Activated B cell treated with CpG ODN at 0.5 μM for 24 hours (primary cell): ENCODE measurements at regions of chr3 and their contacts with region 1.

Region 1: DNA sequence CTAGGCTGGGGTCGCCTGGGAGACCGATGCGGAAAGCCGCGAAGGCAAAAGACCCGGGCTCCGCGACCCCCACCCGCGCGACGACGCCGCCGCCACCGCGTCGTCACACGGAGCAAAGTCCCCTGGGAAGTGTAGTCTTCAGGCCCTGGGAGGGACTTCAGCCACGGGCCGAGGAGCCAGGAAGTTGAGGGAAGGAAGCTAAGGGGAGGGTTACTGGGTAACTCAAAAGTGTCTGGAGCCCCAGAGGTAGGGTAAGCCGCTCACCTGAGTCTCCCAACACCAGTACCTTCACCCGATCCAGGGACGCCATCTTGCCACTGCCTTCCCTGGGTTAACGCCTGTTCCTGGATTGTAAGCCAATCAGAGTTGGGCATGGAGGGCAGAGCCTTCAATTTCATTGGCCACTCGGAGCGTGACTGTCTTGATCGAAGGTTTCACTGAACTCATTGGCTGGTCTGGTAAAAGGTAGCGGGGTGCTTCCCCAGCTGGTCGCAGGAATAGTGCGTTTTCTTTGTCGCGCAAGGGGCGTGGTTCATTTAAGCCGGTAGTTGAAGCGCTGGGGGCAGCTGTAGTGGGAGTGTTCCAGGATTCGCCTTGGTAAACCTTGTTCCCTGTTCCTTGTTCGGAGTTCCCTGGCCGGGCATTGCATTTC is at the starts of genes GTF2E1 and RABL3:
- DNase-seq: peak; percentile 88
- ATAC-seq: peak; percentile 96
- H3K4me3 Mint-ChIP-seq: peak within 1 kb of the TSS; percentile 96
- H3K27ac Mint-ChIP-seq: peak within 1 kb of the TSS; percentile 97
- H3K4me1 Mint-ChIP-seq: peaks cover 36% of the 10 kb centered on the region
- H3K27me3 Mint-ChIP-seq: no peaks in the 10 kb centered on the region
- CTCF ChIP-seq: no peak
- total RNA-seq, gene GTF2E1: 22.1 and 22.9 TPM in 2 replicates
- total RNA-seq, gene RABL3: 29.7 and 29.9 TPM in 2 replicates

Region 2: GRCh38 chr3:119702530-119703157 is 1039.7 kb before region 1 on chr3 and contains the start of gene CFAP91:
- CTCF ChIA-PET with region 1: no interaction called
- POLR2A ChIA-PET with region 1: no interaction called
- intact Hi-C with region 1: loop called (anchors 1 kb)
- DNase-seq: peak; percentile 86
- ATAC-seq: peak; percentile 92
- H3K4me3 Mint-ChIP-seq: peak within 1 kb of the TSS; percentile 86
- H3K27ac Mint-ChIP-seq: peak within 1 kb of the TSS; percentile 72
- H3K4me1 Mint-ChIP-seq: peaks cover 52% of the 10 kb centered on the region
- H3K27me3 Mint-ChIP-seq: no peaks in the 10 kb centered on the region
- CTCF ChIP-seq: no peak
- total RNA-seq, gene CFAP91: 8.5 and 12.9 TPM in 2 replicates

Region 3: DNA sequence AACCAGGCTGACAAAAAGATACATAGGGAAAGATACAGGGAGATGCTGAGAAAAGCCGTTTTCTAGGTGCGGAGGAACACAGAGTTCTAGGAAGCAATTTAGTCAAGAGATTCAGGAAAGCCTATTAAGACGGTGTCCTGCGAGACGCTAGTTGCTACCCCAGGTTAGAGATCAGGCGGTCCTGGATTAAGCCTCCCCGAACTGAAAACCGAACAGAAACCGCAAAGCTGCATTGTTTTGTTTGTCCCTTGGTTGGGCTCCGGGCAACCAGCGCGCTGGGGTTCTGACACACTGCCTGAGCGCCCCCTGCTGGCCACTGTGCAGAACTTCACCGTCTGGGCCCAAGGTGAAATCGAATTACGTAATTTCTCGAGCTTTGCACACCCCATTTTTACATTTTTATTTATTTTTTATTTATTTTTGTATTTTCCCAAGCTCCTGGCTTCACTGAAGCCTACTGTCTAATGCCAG is 183.5 kb before region 1 on chr3:
- CTCF ChIA-PET with region 1: no interaction called
- POLR2A ChIA-PET with region 1: interaction called, 4 read pairs
- intact Hi-C with region 1: loop called (anchors 1 kb)
- DNase-seq: peak; percentile 74
- ATAC-seq: peak; percentile 86
- H3K4me3 Mint-ChIP-seq: peak overlapping the region; percentile 79
- H3K27ac Mint-ChIP-seq: peak overlapping the region; percentile 67
- H3K4me1 Mint-ChIP-seq: peaks cover 14% of the 10 kb centered on the region
- H3K27me3 Mint-ChIP-seq: peaks cover 18% of the 10 kb centered on the region
- CTCF ChIP-seq: peak; percentile 84

Region 4: DNA sequence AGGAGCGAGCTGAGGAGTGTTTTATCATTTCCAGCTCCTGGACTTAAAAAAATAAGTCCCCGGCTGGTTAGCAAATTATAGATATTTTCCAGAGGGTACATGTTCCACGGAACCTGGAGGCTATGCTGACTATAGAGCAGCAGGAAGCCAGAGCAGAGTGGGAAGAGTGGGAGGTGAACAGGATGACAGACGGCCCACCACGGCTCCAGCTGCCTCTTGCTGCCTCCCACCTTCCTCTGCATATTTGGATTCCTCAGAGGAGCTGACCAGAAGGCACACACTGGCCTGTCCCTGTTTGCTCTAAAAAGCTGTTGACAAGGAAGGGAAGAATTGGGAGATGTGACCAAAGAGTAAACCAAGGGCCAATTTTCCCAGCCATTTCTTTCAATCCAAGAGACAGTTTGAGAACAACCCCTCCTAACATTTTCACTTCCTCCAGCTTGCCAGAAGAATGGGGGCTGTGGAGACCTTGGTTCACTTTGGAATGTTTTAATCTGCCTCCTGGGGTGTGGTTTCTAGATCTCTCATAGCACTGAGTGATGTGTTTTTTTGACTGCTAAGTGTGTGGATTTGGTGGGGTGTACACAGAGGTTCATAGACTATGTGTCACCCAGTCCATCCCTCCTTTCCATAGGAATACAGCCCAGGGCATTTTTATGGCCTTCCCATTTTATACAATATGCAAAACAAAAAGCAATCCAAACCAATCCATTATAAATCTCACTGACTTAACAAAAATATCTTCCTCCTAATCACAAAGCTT is 97.1 kb before region 1 on chr3:
- CTCF ChIA-PET with region 1: no interaction called
- POLR2A ChIA-PET with region 1: no interaction called
- intact Hi-C with region 1: no loop called
- DNase-seq: no peak
- ATAC-seq: no peak
- H3K4me3 Mint-ChIP-seq: no peak overlapping the region
- H3K27ac Mint-ChIP-seq: no peak overlapping the region
- H3K4me1 Mint-ChIP-seq: no peaks in the 10 kb centered on the region
- H3K27me3 Mint-ChIP-seq: peaks cover 1% of the 10 kb centered on the region
- CTCF ChIP-seq: no peak

Region 5: GRCh38 chr3:120688121-120688520 is 54.2 kb before region 1 on chr3:
- CTCF ChIA-PET with region 1: no interaction called
- POLR2A ChIA-PET with region 1: interaction called, 3 read pairs
- intact Hi-C with region 1: loop called (anchors 1 kb)
- DNase-seq: no peak
- ATAC-seq: peak; percentile 79
- H3K4me3 Mint-ChIP-seq: no peak overlapping the region
- H3K27ac Mint-ChIP-seq: no peak overlapping the region
- H3K4me1 Mint-ChIP-seq: peaks cover 18% of the 10 kb centered on the region
- H3K27me3 Mint-ChIP-seq: no peaks in the 10 kb centered on the region
- CTCF ChIP-seq: no peak

Region 6: GRCh38 chr3:120708408-120708807 is 33.9 kb before region 1 on chr3:
- CTCF ChIA-PET with region 1: no interaction called
- POLR2A ChIA-PET with region 1: no interaction called
- intact Hi-C with region 1: no loop called
- DNase-seq: no peak
- ATAC-seq: no peak
- H3K4me3 Mint-ChIP-seq: no peak overlapping the region
- H3K27ac Mint-ChIP-seq: no peak overlapping the region
- H3K4me1 Mint-ChIP-seq: peaks cover 11% of the 10 kb centered on the region
- H3K27me3 Mint-ChIP-seq: no peaks in the 10 kb centered on the region
- CTCF ChIP-seq: no peak

Region 7: GRCh38 chr3:120730576-120731542 is 11.5 kb before region 1 on chr3:
- CTCF ChIA-PET with region 1: no interaction called
- POLR2A ChIA-PET with region 1: no interaction called
- intact Hi-C with region 1: no loop called
- DNase-seq: no peak
- ATAC-seq: no peak
- H3K4me3 Mint-ChIP-seq: no peak overlapping the region
- H3K27ac Mint-ChIP-seq: no peak overlapping the region
- H3K4me1 Mint-ChIP-seq: no peaks in the 10 kb centered on the region
- H3K27me3 Mint-ChIP-seq: no peaks in the 10 kb centered on the region
- CTCF ChIP-seq: no peak

Region 8: GRCh38 chr3:120753831-120754230 is 11.5 kb after region 1 on chr3:
- CTCF ChIA-PET with region 1: no interaction called
- POLR2A ChIA-PET with region 1: no interaction called
- intact Hi-C with region 1: no loop called
- DNase-seq: no peak
- ATAC-seq: no peak
- H3K4me3 Mint-ChIP-seq: no peak overlapping the region
- H3K27ac Mint-ChIP-seq: no peak overlapping the region
- H3K4me1 Mint-ChIP-seq: peaks cover 16% of the 10 kb centered on the region
- H3K27me3 Mint-ChIP-seq: no peaks in the 10 kb centered on the region
- CTCF ChIP-seq: no peak